ENCODE measurements at regions of chr14 and their contacts with region 1.

Region 1: DNA sequence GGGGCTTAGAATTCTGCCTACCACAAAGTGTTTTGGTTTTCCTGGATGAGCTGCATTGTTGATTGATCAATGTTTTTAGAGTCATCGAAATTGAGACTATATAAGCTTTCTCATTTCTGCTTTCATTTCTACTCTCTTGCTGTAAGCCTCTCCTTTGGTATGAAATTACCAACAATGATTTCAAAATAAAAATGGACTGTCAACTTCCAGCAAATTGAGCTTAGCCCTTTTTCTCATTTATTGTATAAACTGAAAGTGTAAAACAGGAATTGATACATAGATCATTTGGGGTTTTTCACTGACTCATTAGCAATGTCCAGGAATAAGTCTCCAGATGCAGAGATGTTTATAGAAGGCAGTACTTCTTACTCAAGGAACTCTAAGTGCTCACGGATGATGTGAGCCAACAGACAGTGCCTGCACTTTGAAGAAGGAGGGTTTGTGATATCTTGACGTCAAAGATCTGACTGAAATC is 20.0 kb upstream of the PCNX1 start:
- DNase-seq: peak; percentile 71
- ATAC-seq: peak; percentile 72
- H3K4me3 ChIP-seq: peak overlapping the region; percentile 56
- H3K27ac ChIP-seq: peak overlapping the region; percentile 98
- H3K4me1 ChIP-seq: peaks cover 65% of the 10 kb centered on the region
- H3K27me3 ChIP-seq: no peaks in the 10 kb centered on the region
- CTCF ChIP-seq: no peak
- EP300 ChIP-seq: peak in 1 of 2 experiments; percentile 54; a peak in 1 of 4 replicates
- POLR2A ChIP-seq: no peak
- RAD21 ChIP-seq: no peak

Region 2: DNA sequence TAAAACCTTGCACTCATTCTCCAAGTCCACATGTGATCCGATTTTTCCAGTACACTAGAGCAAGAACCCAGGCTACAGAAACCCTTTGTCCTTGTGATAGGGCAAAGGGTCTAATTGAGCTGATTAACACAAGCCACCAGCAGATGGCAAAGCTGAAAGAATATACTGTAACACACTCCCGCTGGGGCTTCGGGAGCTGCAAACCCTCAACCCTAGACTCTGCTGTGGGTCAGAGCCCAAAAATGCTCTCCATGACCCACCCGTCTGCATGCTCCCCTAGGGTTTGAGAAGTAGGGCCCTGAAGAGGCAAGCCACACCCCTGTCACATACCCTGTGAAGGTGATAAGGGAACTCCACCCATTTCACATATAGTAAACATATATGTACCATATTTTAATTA is 13.6 kb before region 1 on chr14:
- CTCF ChIA-PET with region 1: interaction called, 46 read pairs
- POLR2A ChIA-PET with region 1: interaction called, 10 read pairs
- RAD21 ChIA-PET with region 1: interaction called, 14 read pairs
- SMC1A ChIA-PET with region 1: interaction called, 89 read pairs
- in situ Hi-C with region 1: no loop called
- intact Hi-C with region 1: no loop called
- DNase-seq: no peak
- ATAC-seq: peak; percentile 65
- H3K4me3 ChIP-seq: no peak overlapping the region
- H3K27ac ChIP-seq: no peak overlapping the region
- H3K4me1 ChIP-seq: peaks cover 14% of the 10 kb centered on the region
- H3K27me3 ChIP-seq: no peaks in the 10 kb centered on the region
- CTCF ChIP-seq: peak; percentile 2 to 24 (median 6); a peak in 2 of 6 replicates
- EP300 ChIP-seq: no peak
- POLR2A ChIP-seq: no peak
- RAD21 ChIP-seq: no peak

Measured in GM12878 (cell line).